Sciatic nerve (tissue), 2 donors: ENCODE measurements at regions of chr12 and their contacts with region 1.

Region 1: DNA sequence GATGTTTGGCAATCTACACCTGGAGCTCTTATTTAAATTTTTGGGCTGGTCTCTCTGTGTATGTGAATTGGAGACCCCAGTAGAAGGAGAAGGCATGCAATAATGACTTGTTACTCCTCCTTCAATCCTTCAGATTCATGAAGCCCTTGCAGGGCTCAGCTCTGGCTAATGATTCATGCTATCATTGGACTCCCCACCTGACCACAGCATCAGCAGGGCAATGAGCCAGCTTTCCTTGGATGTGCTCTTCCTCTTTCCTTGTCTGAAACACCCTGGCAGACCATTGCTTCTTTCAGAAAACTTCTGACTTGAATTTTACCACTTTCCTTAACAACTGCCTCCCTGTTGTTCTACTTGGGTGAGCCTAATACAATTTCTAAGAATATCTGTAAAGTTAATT is 1019.2 kb downstream of the AACS start:
- DNase-seq: no peak
- ATAC-seq: no peak

Region 2: DNA sequence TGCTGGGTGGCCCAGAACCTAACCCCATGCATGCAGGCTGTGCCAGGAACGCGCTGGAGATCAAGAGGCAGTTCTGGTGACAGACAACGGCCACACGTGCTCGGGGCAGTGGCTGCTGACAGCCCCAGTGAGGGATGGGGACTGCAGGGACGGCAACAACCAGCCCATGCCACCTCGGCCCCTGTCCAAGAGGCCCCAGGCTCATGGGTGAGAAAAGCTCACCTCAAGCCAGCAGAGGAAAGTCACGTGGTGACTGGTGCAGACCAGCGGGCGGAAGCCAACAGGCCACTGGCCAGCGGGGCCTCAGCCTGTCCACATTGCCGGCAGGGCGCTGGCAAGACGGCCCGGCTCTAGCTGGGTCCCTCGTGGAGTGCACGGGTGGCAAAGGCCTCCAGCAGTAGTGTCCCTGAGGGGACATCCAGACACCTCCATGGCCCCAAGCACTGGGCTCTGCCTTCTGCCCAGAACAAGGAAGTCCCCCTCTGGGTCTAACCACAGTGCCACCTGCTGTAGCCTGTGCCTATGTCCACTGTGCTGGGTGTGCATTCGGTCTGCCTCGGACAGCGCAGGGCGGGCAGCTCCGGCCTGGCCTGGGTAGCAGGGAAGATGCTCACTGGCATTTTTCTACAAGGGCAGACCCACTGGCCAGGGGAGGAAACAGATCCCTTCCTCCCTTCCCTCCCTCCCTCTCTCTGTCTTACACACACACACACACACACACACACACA is 1651.2 kb before region 1 on chr12:
- intact Hi-C with region 1: no loop called
- DNase-seq: no peak
- ATAC-seq: peak; percentile 18

Region 3: GRCh38 chr12:125573271-125573670 is 511.2 kb before region 1 on chr12:
- intact Hi-C with region 1: no loop called
- DNase-seq: no peak
- ATAC-seq: no peak

Region 4: GRCh38 chr12:126107659-126108058 is 23.2 kb after region 1 on chr12:
- intact Hi-C with region 1: loop called (anchors 2 kb)
- DNase-seq: no peak
- ATAC-seq: no peak